ENCODE measurements at regions of chr20 and their contacts with region 1.

Region 1: DNA sequence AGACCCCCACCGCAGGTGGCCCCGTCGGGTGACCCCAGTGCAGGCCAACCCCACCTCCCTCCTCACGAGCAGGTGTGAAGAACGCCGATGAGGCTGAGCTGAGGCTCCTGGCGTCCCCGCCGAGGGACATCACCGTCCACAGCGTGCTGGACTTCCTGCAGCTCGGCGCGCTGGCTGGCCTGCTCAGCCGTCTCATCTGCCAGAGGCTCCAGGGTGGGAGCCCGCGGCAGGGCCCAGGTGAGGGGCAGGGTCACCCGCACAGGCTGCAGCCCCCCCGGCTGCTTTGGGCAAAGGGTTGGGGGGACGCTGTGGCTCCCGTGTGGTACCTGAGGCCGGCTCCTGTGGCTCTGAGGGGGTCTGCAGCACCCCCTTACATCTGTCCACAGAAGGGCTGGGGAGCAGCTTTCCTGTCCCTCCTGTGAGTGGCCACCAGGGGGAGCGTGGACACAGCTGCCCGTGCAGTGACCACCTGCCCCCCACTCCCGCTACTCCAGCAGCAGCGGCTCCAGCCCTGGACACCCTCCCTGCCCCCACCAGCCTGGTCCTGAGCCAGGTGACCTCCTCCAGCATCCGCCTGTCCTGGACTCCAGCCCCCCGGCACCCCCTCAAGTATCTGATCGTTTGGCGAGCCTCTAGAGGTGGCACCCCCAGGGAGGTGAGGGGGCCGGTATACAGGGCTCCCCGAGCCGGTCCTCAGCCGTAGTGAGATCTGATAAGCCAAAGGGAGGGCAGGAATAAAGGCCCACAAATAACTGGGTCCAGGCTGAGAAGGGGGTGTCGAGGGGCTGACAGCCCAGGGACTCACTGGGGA is 16.5 kb downstream of the COL20A1 start:
- DNase-seq: no peak
- ATAC-seq: no peak
- H3K4me3 ChIP-seq: no peak overlapping the region
- H3K4me3 Mint-ChIP-seq: no peak overlapping the region
- H3K27ac ChIP-seq: no peak overlapping the region
- H3K27ac Mint-ChIP-seq: no peak overlapping the region
- H3K4me1 ChIP-seq: no peaks in the 10 kb centered on the region
- H3K4me1 Mint-ChIP-seq: no peaks in the 10 kb centered on the region
- H3K27me3 ChIP-seq: peaks cover 0 to 12% (median 0%) of the 10 kb centered on the region in 4 experiments
- H3K27me3 Mint-ChIP-seq: peaks cover 4% of the 10 kb centered on the region
- CTCF ChIP-seq: peak; percentile 58

Region 2: DNA sequence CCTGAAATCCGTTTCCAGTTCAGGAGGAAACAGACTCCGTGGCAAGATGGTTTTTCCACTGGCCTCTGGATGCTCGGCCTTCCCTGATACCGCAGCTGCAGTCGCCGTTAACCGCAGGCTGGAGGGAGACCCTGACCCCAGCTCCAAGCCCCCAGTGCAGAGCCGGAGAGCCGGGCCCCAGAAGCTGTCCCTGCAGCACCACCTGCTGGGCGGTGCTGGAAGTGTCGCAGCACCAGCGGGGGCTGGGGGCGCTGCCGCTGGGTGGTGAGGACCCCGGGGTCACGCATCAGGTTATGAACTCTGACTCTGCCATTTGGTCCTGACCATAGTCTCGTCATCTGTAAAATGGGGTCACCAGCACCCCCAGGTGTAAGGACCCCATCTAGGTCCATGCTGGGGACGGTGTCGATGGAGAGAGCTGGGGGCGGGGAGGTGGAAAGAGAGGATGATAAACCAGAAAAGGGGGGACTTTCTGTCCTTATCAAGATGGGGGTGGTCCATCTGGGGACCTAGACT is 72.4 kb after region 1 on chr20:
- CTCF ChIA-PET with region 1: interaction called, 15 read pairs
- POLR2A ChIA-PET with region 1: no interaction called
- intact Hi-C with region 1: no loop called
- DNase-seq: peak; percentile 50
- ATAC-seq: peak; percentile 36
- H3K4me3 ChIP-seq: no peak overlapping the region
- H3K4me3 Mint-ChIP-seq: no peak overlapping the region
- H3K27ac ChIP-seq: no peak overlapping the region
- H3K27ac Mint-ChIP-seq: no peak overlapping the region
- H3K4me1 ChIP-seq: no peaks in the 10 kb centered on the region
- H3K4me1 Mint-ChIP-seq: no peaks in the 10 kb centered on the region
- H3K27me3 ChIP-seq: peaks cover 0 to 23% (median 0%) of the 10 kb centered on the region in 4 experiments
- H3K27me3 Mint-ChIP-seq: peaks cover 17% of the 10 kb centered on the region
- CTCF ChIP-seq: peak; percentile 86

Measured in B cell (primary cell).